GM13976 (cell line): ENCODE measurements at regions of chr20 and their contacts with region 1.

Region 1: DNA sequence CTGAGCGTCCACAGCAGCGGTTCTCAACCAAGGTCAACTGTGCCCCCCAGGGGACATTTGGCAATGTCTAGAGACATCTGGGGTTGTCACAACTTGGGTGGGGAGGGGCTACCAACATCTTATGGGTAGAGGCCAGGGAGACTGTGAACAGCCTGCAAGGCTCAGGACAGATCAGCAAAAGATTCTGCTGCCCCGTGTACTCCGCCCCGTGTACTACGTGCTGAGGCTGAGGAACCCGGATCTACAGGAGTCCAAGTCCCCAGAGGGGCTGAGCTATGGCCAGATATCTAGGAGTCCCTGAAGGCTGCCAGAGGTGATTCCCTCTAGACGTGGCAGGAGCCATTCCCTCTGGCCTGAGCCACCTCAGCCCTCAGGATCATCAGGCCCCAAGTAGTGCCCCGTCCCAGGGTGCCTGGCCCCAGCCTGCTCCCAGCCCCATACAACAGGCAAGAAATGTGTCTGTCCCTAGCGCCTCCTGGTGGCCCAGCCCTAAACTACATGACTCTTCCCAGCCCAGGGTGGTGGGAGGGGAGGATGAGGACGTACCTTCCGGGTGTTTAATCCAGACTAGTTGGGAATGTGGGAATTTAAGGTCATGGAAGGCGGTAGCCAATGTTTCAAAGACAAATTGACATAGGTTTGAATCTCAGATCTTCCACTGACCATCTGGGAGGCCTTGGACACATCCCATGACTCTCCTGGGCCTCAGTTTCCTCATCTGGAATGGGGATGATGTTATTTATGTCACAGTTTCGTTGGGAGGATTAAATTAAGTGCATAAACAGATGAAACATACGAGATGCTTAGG is 49.5 kb upstream of the PTPN1 start:
- DNase-seq: peak; percentile 82
- CTCF ChIP-seq: peak; percentile 88

Region 2: GRCh38 chr20:49964964-49965780 is 495.5 kb before region 1 on chr20:
- in situ Hi-C with region 1: loop called (anchors 25 kb)
- DNase-seq: peak; percentile 57
- CTCF ChIP-seq: peak; percentile 53

Region 3: GRCh38 chr20:50189681-50190582 is 270.7 kb before region 1 on chr20:
- in situ Hi-C with region 1: loop called (anchors 5 kb)
- DNase-seq: peak; percentile 93
- CTCF ChIP-seq: peak; percentile 40

Region 4: DNA sequence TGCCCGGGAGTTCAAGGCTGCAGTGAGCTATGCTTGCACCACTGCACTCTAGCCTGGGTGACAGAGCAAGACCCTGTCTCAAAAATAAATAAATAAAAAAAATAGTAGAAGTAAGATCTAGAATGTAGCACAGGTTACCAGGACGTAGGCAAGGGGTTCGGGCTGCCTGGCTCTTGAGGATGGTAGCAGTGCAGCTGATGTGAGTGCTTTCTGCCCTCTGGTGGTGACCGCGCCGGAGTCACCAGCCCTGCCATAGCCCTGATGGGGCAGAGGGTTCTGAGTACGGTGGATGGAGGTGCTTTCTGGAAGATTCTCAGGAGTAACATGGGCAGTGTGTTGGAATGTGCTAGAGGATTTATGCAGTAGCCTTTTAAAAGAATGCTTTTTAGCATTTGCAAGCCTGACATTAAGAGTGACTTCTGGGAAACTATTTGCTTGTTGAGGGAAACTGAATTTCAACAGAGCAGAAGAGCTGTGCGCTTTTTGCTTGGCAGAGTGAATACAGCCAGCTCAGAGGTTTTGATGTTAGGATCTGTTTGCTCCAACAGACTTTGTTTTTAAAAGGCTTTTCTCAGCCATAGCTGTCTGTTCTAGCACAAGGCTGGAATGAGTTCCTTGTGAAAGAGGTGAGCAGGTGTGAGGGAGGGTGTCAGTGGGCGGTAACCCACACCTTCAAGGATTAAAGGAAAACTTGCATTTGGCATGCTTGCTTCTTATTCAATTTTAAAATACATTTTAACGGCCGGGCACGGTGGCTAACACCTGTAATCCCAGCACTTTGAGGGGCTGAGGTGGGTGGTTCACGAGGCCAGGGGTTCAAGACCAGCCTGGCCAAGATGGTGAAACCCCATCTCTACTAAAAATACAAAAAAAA is 115.4 kb after region 1 on chr20:
- in situ Hi-C with region 1: loop called (anchors 10 kb)
- DNase-seq: no peak
- CTCF ChIP-seq: peak; percentile 74

Region 5: GRCh38 chr20:50670126-50670862 is 209.6 kb after region 1 on chr20:
- in situ Hi-C with region 1: no loop called
- DNase-seq: no peak
- CTCF ChIP-seq: no peak

Region 6: GRCh38 chr20:50776122-50776817 is 315.6 kb after region 1 on chr20:
- in situ Hi-C with region 1: no loop called
- DNase-seq: no peak
- CTCF ChIP-seq: no peak